CD8-positive, alpha-beta T cell (primary cell): ENCODE measurements at regions of chr14 and their contacts with region 1.

Region 1: DNA sequence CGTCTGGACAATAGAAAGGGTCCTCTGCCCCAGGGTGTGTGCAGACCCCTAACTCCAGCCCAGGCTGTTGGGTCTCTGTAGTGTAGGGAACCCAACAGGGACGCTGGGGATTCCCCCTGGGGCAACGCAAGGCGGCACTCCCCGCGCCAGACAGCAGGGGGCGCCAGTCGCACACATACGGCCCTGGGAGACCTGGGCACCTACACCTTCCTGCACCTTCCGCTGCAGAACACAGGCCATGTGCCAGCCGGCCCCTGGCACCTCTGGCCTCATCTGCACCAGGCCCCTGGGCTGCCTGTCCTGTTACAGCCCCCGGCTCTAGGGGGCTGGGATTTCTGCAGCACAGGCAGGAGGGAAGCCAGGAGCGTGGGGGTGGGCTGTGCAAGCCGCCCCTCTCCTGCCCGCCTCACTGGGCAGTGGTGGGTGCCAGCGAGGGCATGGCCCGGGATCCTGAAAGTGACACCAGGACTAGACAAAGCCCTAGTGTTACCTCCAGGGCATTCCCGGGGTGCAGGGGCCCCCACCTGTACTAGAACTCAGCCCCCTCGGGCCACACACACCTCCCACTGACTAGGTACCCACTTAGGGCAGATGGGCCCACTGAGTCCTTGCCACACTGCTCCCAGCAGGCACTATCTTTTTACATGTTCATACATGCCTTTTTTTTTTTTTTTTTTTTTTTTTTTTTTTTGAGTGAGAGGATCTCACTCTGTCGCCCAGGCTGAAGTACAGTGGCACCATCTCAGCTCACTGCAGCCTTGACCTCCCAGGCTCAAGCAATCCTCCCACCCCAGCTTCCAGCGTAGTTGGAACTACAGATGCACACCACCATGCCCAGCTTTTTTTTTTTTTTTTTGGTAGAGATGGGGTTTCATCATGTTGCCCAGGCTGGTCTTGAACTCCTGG is 37.5 kb downstream of the CCNK start:
- DNase-seq: peak; percentile 68 to 92 (median 80)
- ATAC-seq: peak; percentile 91
- H3K4me3 ChIP-seq: no peak overlapping the region
- H3K4me3 Mint-ChIP-seq: no peak overlapping the region
- H3K27ac ChIP-seq: no peak overlapping the region
- H3K27ac Mint-ChIP-seq: no peak overlapping the region
- H3K4me1 ChIP-seq: peaks cover 3% of the 10 kb centered on the region
- H3K4me1 Mint-ChIP-seq: no peaks in the 10 kb centered on the region
- H3K27me3 ChIP-seq: no peaks in the 10 kb centered on the region
- H3K27me3 Mint-ChIP-seq: no peaks in the 10 kb centered on the region
- CTCF ChIP-seq: peak; percentile 88

Region 2: DNA sequence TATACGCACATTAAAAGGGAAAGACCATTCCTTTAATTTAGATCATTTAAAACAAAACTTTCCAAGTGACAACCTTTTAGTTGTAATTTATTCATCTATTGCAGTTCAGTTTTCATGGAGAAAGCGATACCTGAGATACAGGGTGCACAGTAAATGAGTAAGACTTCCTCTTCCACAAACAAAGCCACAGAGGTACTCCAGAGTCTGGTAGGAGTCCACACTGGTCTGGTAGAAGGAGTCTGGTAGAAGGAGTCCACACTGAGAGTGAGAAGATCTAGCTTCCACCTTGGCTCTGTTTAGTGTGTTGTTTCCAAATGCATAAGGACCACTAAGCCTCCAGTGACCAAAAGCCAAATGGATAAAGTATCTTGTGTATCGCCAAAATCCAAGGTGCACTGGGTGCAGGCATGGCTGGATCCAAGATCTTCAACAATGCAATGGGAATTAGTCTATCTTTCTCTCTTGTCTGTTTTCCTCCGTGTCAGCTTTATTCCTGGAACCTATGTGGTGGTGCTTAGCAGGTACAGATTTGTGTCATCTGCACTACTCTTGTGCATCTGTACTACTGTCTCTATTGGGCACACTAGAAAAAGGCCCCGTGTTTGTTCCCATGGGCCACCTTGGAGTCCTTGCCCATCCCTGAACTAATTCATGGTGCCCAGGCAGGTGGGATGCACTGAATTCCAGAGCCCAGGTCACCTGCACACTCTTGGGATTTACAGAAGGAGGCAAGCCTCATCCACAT is 577.8 kb before region 1 on chr14:
- CTCF ChIA-PET with region 1: no interaction called
- POLR2A ChIA-PET with region 1: no interaction called
- intact Hi-C with region 1: loop called in 1 of 2 experiments (anchors 5 kb)
- DNase-seq: no peak
- ATAC-seq: no peak
- H3K4me3 ChIP-seq: no peak overlapping the region
- H3K4me3 Mint-ChIP-seq: no peak overlapping the region
- H3K27ac ChIP-seq: no peak overlapping the region
- H3K27ac Mint-ChIP-seq: no peak overlapping the region
- H3K4me1 ChIP-seq: peaks cover 41% of the 10 kb centered on the region
- H3K4me1 Mint-ChIP-seq: peaks cover 50% of the 10 kb centered on the region
- H3K27me3 ChIP-seq: no peaks in the 10 kb centered on the region
- H3K27me3 Mint-ChIP-seq: no peaks in the 10 kb centered on the region
- CTCF ChIP-seq: no peak

Region 3: DNA sequence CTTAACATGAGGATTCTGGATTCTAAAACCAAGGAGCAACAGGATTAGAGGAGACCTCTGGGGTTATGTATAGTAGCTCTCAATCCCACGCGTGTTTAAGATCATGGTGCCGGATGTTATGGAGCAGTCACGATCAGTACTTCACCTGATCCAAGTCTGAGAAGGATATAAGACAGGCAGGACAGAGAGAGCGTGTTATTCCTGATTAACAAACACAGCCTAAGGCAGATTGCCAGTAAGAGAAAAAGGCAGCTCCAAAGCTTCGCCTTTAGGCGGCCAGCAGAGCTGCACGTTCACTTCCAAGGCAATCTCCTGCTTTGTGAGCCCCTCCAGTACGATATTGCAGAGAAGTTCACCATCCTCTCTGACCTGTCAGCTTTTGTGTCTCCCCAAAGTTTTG is 43.5 kb before region 1 on chr14:
- CTCF ChIA-PET with region 1: no interaction called
- POLR2A ChIA-PET with region 1: no interaction called
- intact Hi-C with region 1: no loop called
- DNase-seq: no peak
- ATAC-seq: no peak
- H3K4me3 ChIP-seq: no peak overlapping the region
- H3K4me3 Mint-ChIP-seq: no peak overlapping the region
- H3K27ac ChIP-seq: no peak overlapping the region
- H3K27ac Mint-ChIP-seq: no peak overlapping the region
- H3K4me1 ChIP-seq: peaks cover 14% of the 10 kb centered on the region
- H3K4me1 Mint-ChIP-seq: peaks cover 53% of the 10 kb centered on the region
- H3K27me3 ChIP-seq: no peaks in the 10 kb centered on the region
- H3K27me3 Mint-ChIP-seq: no peaks in the 10 kb centered on the region
- CTCF ChIP-seq: no peak

Region 4: DNA sequence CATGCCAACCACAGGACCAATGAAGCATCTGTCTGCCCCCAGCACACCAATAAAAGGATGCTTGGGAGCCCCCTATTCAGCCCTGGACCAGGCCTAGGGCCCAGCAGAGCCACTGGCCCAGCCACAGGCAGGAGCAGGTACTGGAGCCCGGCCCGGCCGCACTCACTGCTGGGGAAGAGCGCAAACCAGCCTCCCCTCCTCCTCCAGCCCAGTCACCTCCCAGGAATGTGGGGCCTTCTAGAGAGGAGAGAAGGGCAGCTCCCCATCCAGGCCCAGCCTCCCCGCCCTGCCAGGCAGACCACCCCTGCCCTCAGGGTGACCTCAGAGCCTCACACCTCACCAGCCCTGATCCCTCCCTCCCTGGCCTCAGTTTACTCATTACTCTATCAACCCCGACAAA is 18.7 kb after region 1 on chr14:
- CTCF ChIA-PET with region 1: no interaction called
- POLR2A ChIA-PET with region 1: no interaction called
- intact Hi-C with region 1: no loop called
- DNase-seq: no peak
- ATAC-seq: no peak
- H3K4me3 ChIP-seq: no peak overlapping the region
- H3K4me3 Mint-ChIP-seq: no peak overlapping the region
- H3K27ac ChIP-seq: no peak overlapping the region
- H3K27ac Mint-ChIP-seq: no peak overlapping the region
- H3K4me1 ChIP-seq: no peaks in the 10 kb centered on the region
- H3K4me1 Mint-ChIP-seq: peaks cover 7% of the 10 kb centered on the region
- H3K27me3 ChIP-seq: no peaks in the 10 kb centered on the region
- H3K27me3 Mint-ChIP-seq: no peaks in the 10 kb centered on the region
- CTCF ChIP-seq: no peak

Region 5: GRCh38 chr14:99589031-99589441 is 70.3 kb after region 1 on chr14:
- CTCF ChIA-PET with region 1: no interaction called
- POLR2A ChIA-PET with region 1: no interaction called
- intact Hi-C with region 1: no loop called
- DNase-seq: no peak
- ATAC-seq: no peak
- H3K4me3 ChIP-seq: no peak overlapping the region
- H3K4me3 Mint-ChIP-seq: no peak overlapping the region
- H3K27ac ChIP-seq: no peak overlapping the region
- H3K27ac Mint-ChIP-seq: no peak overlapping the region
- H3K4me1 ChIP-seq: no peaks in the 10 kb centered on the region
- H3K4me1 Mint-ChIP-seq: peaks cover 7% of the 10 kb centered on the region
- H3K27me3 ChIP-seq: no peaks in the 10 kb centered on the region
- H3K27me3 Mint-ChIP-seq: no peaks in the 10 kb centered on the region
- CTCF ChIP-seq: no peak

Region 6: DNA sequence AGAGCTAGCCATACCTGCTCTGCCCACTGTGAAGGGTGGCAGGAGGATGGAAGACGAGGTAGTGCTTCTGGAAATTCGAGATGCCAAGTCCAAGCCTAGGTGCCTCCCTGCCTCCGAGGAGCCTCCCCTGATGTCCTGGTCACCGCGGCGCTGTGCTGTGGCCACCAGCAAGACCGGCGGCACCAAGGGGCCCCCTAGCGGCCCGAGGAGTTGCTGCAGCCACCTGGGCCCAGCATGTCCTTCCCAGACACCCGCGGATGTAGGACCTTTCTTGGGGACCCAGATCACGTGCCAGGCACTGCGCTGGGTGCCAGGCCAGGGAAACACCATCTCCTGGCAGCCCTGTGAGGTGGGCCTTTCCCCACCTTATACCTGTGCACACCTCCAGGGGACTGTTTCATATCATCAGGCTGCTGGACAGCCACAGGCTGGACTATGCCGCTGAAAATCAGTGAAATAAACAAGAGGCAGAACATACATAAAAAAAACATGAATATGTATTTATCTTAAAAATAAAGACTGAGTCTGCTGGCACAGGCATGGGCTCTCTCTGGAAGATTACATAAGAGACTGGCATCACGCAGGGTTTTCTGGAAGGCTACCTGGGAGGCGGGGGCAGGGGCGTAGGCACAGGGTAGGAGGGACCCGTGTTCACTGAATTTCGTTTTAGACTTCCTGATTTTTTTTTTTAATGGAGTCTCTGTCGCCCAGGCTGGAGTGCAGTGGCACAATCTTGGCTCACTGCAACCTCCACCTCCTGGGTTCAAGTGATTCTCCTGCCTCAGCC is 110.3 kb after region 1 on chr14:
- CTCF ChIA-PET with region 1: interaction called, 34 read pairs
- POLR2A ChIA-PET with region 1: no interaction called
- intact Hi-C with region 1: loop called in 1 of 2 experiments (anchors 1 kb)
- DNase-seq: peak; percentile 27 to 72 (median 56)
- ATAC-seq: peak; percentile 77
- H3K4me3 ChIP-seq: no peak overlapping the region
- H3K4me3 Mint-ChIP-seq: no peak overlapping the region
- H3K27ac ChIP-seq: no peak overlapping the region
- H3K27ac Mint-ChIP-seq: no peak overlapping the region
- H3K4me1 ChIP-seq: no peaks in the 10 kb centered on the region
- H3K4me1 Mint-ChIP-seq: peaks cover 2% of the 10 kb centered on the region
- H3K27me3 ChIP-seq: peaks cover 2 to 4% of the 10 kb centered on the region in 2 experiments
- H3K27me3 Mint-ChIP-seq: peaks cover 27% of the 10 kb centered on the region
- CTCF ChIP-seq: peak; percentile 72

Region 7: DNA sequence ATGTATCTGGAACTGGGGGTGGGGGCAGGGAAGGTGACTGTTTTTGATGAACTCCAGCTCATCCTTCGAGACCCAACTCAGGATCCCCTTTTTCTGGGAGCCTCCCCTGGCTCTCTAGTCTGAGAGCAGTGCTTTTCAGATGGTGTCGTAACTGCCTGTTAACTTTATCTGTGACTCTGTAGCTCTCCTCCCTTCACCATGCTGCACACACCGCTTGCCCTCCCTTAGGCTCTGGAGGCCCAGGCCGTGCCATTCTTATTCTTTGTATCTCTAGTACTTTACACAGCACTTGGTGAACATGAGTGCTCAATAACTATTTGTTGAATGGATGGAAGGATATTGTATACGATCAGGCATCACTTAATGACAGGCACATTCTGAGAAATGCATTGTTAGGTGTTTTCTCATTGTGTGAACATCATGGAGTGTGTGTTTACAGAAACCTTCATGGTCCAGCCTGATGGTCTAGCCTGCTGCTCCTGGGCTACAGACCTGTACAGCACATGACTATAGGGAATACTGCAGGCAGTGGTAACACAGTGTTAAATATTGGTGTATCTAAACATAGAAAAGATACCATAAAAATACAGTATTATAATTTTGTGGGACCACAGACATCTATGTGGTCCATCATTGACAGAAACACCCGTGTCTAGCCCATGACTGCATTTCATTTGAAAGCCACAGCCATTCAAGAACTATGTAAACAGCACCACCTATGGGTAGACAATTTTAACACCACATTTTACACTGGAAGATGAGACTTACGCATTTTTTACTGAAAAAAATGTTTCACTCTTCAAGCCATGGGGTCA is 366.3 kb after region 1 on chr14:
- CTCF ChIA-PET with region 1: interaction called, 4 read pairs
- POLR2A ChIA-PET with region 1: no interaction called
- intact Hi-C with region 1: loop called in 1 of 2 experiments (anchors 1 kb)
- DNase-seq: peak in 4 of 9 experiments; percentile 11 to 74 (median 40)
- ATAC-seq: peak; percentile 51
- H3K4me3 ChIP-seq: no peak overlapping the region
- H3K4me3 Mint-ChIP-seq: no peak overlapping the region
- H3K27ac ChIP-seq: no peak overlapping the region
- H3K27ac Mint-ChIP-seq: no peak overlapping the region
- H3K4me1 ChIP-seq: no peaks in the 10 kb centered on the region
- H3K4me1 Mint-ChIP-seq: no peaks in the 10 kb centered on the region
- H3K27me3 ChIP-seq: peaks cover 0 to 3% of the 10 kb centered on the region in 2 experiments
- H3K27me3 Mint-ChIP-seq: peaks cover 8% of the 10 kb centered on the region
- CTCF ChIP-seq: peak; percentile 93

Region 8: DNA sequence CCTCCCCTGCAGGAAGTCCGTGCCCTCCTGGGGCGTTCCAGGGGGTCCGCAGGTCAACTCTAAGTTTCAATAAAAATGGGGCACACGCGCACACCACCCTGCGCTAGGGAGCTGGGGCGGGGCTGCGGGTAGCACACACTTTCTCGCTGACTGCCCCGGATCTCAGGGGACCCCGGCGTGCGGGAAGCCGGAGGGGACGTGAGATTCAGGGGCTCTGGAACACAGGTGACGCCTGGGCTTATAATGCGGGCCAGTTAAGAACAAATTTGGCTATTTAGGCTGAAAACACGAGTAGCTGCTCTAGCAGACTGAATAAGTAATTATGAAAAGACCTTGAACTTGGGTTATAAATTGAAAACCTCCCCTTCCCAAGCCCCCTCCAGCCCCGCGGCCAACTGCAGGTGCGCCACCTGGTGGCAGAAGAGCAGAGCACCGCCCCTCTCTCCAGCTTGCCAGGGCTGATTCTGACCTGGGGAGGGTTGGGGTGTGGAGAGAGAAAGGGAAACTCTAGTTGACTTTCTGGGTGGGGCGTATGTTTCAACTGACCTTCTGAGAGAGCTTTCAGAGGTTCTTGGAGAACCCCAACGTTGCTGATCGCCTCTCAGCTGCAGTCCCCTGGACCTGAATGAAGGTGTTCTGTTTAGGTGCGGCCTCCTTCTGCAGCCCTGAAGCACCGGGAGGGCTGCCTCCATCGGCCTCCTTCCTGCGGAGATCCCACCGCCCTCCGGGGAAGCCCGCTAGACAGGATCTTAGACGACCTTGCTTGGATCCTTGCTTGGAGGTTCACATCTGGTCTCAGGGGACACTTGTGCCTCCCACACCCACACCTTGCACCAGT is 428.2 kb after region 1 on chr14:
- CTCF ChIA-PET with region 1: interaction called, 4 read pairs
- POLR2A ChIA-PET with region 1: no interaction called
- intact Hi-C with region 1: loop called (anchors 1 kb)
- DNase-seq: peak; percentile 20 to 74 (median 59)
- ATAC-seq: peak; percentile 73
- H3K4me3 ChIP-seq: peak overlapping the region; percentile 34 to 44
- H3K4me3 Mint-ChIP-seq: peak overlapping the region; percentile 76
- H3K27ac ChIP-seq: no peak overlapping the region
- H3K27ac Mint-ChIP-seq: no peak overlapping the region
- H3K4me1 ChIP-seq: peaks cover 15% of the 10 kb centered on the region
- H3K4me1 Mint-ChIP-seq: peaks cover 8% of the 10 kb centered on the region
- H3K27me3 ChIP-seq: peaks cover 0 to 19% of the 10 kb centered on the region in 2 experiments
- H3K27me3 Mint-ChIP-seq: peaks cover 12% of the 10 kb centered on the region
- CTCF ChIP-seq: peak; percentile 99